ENCODE measurements at regions of chr22 and their contacts with region 1.

Region 1: DNA sequence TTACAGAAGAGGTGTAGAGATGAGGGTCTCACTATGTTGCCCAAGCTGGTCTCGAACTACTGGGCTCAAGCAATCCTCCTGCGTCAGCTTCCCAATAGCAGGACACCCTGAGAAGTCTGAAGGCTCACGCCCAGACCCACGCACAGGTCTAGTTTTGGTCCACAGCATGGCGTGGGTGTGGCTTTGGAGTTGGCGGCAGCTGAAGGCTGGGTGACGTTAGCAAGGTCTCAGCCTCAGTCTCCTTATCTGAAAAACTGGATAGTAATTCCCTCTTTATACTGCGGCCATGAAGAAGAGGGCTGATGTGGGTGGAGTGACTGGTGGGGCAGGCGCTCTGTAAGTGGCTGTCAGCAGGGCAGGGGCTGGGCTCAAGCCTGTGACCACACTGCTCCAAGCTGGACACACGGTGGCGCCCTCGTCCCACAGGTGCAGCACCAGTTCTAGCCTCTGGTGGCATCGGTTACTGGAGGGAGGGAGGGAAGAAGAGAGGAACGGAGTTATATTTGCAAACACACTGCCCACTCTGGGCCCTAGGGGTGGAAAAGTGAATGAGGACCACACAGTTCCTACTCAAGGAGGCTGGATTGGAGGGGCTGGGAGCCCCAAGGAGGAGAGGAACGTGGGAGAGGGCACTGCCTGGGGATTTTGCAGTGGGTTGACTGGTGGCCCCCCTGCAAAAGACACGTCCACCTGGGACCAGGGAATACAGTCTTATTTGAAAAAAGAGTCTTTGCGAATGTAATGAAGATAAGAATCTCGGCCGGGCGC is 19.6 kb upstream of the CARD10 start:
- DNase-seq: peak; percentile 97
- H3K4me3 Mint-ChIP-seq: peak overlapping the region; percentile 5
- H3K27ac Mint-ChIP-seq: peak overlapping the region; percentile 52
- H3K4me1 Mint-ChIP-seq: peaks cover 48% of the 10 kb centered on the region
- H3K27me3 Mint-ChIP-seq: no peaks in the 10 kb centered on the region
- CTCF ChIP-seq: peak; percentile 97

Region 2: GRCh38 chr22:37561212-37562048 is 22.7 kb after region 1 on chr22:
- CTCF ChIA-PET with region 1: interaction called, 34 read pairs
- intact Hi-C with region 1: no loop called
- DNase-seq: peak; percentile 97
- H3K4me3 Mint-ChIP-seq: peak overlapping the region; percentile 87
- H3K27ac Mint-ChIP-seq: peak overlapping the region; percentile 100
- H3K4me1 Mint-ChIP-seq: peaks cover 82% of the 10 kb centered on the region
- H3K27me3 Mint-ChIP-seq: no peaks in the 10 kb centered on the region
- CTCF ChIP-seq: peak; percentile 90

Region 3: GRCh38 chr22:37566903-37567820 is 28.4 kb after region 1 on chr22:
- CTCF ChIA-PET with region 1: interaction called, 51 read pairs
- intact Hi-C with region 1: no loop called
- DNase-seq: peak; percentile 96
- H3K4me3 Mint-ChIP-seq: peak overlapping the region; percentile 87
- H3K27ac Mint-ChIP-seq: peak overlapping the region; percentile 99
- H3K4me1 Mint-ChIP-seq: peaks cover 98% of the 10 kb centered on the region
- H3K27me3 Mint-ChIP-seq: no peaks in the 10 kb centered on the region
- CTCF ChIP-seq: peak; percentile 97

Region 4: DNA sequence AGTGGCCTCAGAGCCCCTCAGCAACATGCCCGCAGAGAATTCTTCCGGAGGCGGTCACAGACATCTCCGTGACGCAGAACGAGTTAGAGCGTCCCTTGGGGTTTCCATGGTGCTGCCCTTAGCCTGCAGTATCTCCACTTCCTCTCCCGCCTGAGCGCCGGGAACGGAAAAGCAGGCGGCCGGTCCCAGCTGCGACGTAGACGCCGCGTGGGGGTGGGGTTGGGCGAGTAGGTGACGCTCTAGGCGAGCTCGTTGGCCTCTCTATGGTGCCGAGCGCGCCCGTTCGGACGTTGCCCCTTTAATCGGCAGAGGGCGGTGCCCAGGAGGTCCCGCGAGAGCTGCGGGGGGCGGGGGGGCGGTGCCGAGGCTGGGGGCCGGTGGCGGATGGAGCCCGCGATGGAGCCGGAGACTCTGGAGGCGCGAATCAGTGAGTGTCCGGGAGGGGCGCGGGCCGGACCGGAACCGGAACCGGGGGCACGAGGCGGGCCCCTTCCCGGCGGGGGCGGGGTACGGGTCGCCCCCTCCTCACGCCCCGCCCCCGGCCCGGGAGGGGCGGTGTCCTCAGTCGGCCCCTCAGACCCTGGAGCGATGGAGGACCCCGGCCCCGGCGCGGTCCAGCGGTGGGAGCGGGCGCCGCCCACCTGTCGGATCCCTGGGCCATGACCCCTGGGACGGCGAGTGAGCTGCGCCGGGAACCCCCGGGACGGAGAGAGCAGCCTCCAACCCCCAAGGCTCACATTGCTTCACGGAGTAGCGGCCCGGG is 69.9 kb after region 1 on chr22 and contains the start of gene GGA1:
- CTCF ChIA-PET with region 1: interaction called, 12 read pairs
- intact Hi-C with region 1: no loop called
- DNase-seq: peak; percentile 95
- H3K4me3 Mint-ChIP-seq: peak within 1 kb of the TSS; percentile 89
- H3K27ac Mint-ChIP-seq: peak within 1 kb of the TSS; percentile 87
- H3K4me1 Mint-ChIP-seq: peaks cover 10% of the 10 kb centered on the region
- H3K27me3 Mint-ChIP-seq: no peaks in the 10 kb centered on the region
- CTCF ChIP-seq: no peak
- total RNA-seq, gene GGA1: 89.8 and 95.3 TPM in 2 replicates

Region 5: DNA sequence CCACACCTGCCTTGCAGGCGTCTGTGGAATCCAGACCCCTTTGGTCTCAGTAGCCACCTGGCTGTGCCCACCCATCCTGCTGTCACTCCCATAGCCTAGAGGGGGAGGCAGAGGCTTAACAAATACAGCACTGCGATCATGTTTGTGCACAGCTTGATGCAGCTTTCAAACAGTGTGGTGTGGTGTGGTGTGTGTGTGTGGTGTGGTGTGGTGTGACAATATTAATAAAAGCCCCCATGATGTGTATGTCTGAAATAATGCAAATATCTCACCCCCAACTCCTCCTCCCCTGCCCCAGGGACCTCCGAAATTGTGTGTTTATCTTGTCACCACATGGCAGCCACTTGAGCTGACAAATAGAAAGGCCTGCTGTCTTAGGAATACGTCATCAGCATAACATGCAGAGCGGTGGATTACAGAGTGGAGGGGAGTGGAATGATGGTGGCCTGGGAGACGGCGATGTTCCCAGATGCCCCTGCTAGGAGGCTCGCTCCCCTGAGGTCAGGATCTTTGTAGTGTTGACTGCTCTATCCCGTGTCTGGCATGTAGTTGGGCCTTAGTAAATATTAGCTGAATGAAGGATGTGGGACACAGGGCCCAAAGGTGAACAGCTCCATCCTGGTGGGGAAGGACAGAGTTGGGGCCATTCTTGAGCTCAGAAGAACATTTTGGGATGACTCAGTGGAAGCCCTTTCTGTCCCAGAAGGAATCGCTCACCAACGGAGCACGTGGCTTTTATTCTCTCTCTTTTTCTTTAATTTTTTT is 122.6 kb after region 1 on chr22:
- CTCF ChIA-PET with region 1: no interaction called
- intact Hi-C with region 1: no loop called
- DNase-seq: no peak
- H3K4me3 Mint-ChIP-seq: no peak overlapping the region
- H3K27ac Mint-ChIP-seq: no peak overlapping the region
- H3K4me1 Mint-ChIP-seq: peaks cover 40% of the 10 kb centered on the region
- H3K27me3 Mint-ChIP-seq: no peaks in the 10 kb centered on the region
- CTCF ChIP-seq: no peak